Breast epithelium (tissue), 4 donors: ENCODE measurements at regions of chr3 and their contacts with region 1.

Region 1: GRCh38 chr3:15384510-15385237 is 42.7 kb downstream of the METTL6 start:
- DNase-seq: no peak
- H3K4me3 ChIP-seq: no peak overlapping the region
- H3K27ac ChIP-seq: peak overlapping the region in 1 of 2 donors; percentile 38
- H3K4me1 ChIP-seq: no peaks in the 10 kb centered on the region
- H3K27me3 ChIP-seq: no peaks in the 10 kb centered on the region
- CTCF ChIP-seq: no peak
- POLR2A ChIP-seq: no peak

Region 2: GRCh38 chr3:15268033-15268631 is 116.5 kb before region 1 on chr3:
- intact Hi-C with region 1: loop called (anchors 10 kb)
- DNase-seq: peak; percentile 78 to 82
- H3K4me3 ChIP-seq: no peak overlapping the region
- H3K27ac ChIP-seq: peak overlapping the region; percentile 90 to 96
- H3K4me1 ChIP-seq: peaks cover 0 to 8% of the 10 kb centered on the region in 2 donors
- H3K27me3 ChIP-seq: no peaks in the 10 kb centered on the region
- CTCF ChIP-seq: peak; percentile 81 to 96 (median 94)
- POLR2A ChIP-seq: no peak

Region 3: GRCh38 chr3:15367059-15367458 is 17.6 kb before region 1 on chr3:
- intact Hi-C with region 1: no loop called
- DNase-seq: no peak
- H3K4me3 ChIP-seq: no peak overlapping the region
- H3K27ac ChIP-seq: no peak overlapping the region
- H3K4me1 ChIP-seq: no peaks in the 10 kb centered on the region
- H3K27me3 ChIP-seq: no peaks in the 10 kb centered on the region
- CTCF ChIP-seq: no peak
- POLR2A ChIP-seq: no peak

Region 4: DNA sequence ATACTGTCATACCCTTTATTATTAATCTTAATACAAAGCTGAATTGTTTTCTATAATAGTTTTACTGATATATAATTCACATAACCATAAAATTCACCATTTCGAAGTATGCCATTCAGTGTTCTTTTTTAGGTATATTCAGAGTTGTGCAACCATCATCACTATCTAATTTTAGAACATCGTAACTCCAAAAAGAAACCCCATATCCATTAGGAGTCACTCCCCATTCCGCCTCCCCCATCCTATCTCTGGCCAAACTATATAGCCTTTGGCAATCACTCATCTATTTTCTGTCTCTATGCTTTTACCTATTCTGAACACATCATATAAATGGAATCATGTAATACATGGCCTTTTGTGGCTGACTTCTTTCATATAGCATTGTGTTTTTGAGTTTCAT is 620.1 kb after region 1 on chr3:
- intact Hi-C with region 1: loop called (anchors 5 kb)
- DNase-seq: no peak
- H3K4me3 ChIP-seq: no peak overlapping the region
- H3K27ac ChIP-seq: no peak overlapping the region
- H3K4me1 ChIP-seq: no peaks in the 10 kb centered on the region
- H3K27me3 ChIP-seq: no peaks in the 10 kb centered on the region
- CTCF ChIP-seq: no peak
- POLR2A ChIP-seq: no peak